Esophagus muscularis mucosa (tissue), 4 donors: ENCODE measurements at regions of chr14 and their contacts with region 1.

Region 1: GRCh38 chr14:57486767-57487379 is 6.8 kb downstream of the CCDC198 start:
- DNase-seq: no peak
- H3K4me3 ChIP-seq: no peak overlapping the region
- H3K27ac ChIP-seq: no peak overlapping the region
- H3K4me1 ChIP-seq: peaks cover 0 to 5% (median 0%) of the 10 kb centered on the region in 4 donors
- H3K27me3 ChIP-seq: no peaks in the 10 kb centered on the region
- CTCF ChIP-seq: peak; percentile 51 to 64 (median 52)
- EP300 ChIP-seq: no peak
- POLR2A ChIP-seq: no peak

Region 2: DNA sequence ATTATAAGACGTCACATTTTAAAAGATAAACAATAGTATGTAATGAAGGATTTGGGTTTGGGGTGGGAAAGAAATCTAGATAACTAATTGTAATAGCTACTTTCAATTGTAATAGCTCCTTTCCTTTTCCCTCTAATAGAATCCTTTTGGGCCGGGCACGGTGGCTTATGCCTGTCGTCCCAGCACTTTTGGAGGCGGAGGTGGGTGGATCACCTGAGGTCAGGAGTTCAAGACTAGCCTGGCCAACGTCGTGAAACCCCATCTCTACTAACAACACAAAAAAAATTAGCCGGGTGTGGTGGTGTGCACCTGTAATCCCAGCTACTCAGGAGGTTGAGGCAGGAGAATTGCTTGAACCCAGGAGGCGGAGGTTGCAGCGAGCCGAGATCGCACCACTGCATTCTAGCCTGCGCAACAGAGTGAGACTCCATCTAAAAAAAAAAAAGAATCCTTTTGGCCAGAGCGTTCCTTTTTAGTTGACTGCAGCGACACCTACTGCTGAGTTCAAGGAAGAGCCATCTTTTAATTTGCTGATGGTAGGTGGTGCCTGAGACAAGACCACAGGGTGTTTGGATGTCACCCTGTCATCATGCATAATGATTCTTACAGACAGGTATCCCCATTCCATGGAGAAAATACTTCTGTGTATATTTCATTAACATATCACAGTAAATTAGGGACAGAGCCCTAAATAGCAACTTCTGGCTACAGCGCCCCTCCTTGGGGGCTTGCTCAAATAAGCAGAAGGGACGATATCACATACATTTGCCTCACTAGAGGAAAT is 585.6 kb after region 1 on chr14:
- intact Hi-C with region 1: loop called (anchors 2 kb)
- DNase-seq: no peak
- H3K4me3 ChIP-seq: peak overlapping the region; percentile 5 to 40 (median 30)
- H3K27ac ChIP-seq: no peak overlapping the region
- H3K4me1 ChIP-seq: peaks cover 3 to 11% (median 5%) of the 10 kb centered on the region in 4 donors
- H3K27me3 ChIP-seq: no peaks in the 10 kb centered on the region
- CTCF ChIP-seq: peak; percentile 67 to 77 (median 76)
- EP300 ChIP-seq: no peak
- POLR2A ChIP-seq: no peak